ENCODE measurements at regions of chr9 and their contacts with region 1.

Region 1: GRCh38 chr9:36250079-36250478 is 8.2 kb downstream of the GNE start:
- DNase-seq: no peak
- H3K4me3 Mint-ChIP-seq: no peak overlapping the region
- H3K27ac Mint-ChIP-seq: peak overlapping the region; percentile 23
- H3K4me1 Mint-ChIP-seq: peaks cover 5% of the 10 kb centered on the region
- H3K27me3 Mint-ChIP-seq: no peaks in the 10 kb centered on the region
- CTCF ChIP-seq: no peak

Region 2: GRCh38 chr9:36174731-36175130 is 75.3 kb before region 1 on chr9:
- CTCF ChIA-PET with region 1: no interaction called
- POLR2A ChIA-PET with region 1: no interaction called
- intact Hi-C with region 1: no loop called
- DNase-seq: no peak
- H3K4me3 Mint-ChIP-seq: no peak overlapping the region
- H3K27ac Mint-ChIP-seq: no peak overlapping the region
- H3K4me1 Mint-ChIP-seq: no peaks in the 10 kb centered on the region
- H3K27me3 Mint-ChIP-seq: no peaks in the 10 kb centered on the region
- CTCF ChIP-seq: no peak

Region 3: DNA sequence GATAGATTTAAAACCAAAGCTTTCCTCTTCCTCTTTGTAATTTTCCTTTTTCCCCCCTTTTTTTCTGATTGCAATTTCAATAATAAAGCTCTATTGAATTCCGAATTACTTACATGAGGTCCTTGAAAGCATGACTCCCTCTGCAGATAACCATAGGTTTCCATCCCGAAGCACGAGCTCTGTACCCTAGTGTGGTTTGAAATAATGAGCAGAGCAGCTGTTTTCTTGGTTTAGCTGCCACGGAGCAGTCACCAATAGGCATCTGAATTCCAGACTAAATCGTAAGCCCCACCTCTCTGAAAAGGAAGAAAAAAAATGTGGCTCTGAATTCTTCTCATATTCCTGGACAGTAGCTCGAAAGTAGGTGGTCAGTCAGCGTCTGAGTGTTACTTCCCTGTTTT is 26.7 kb after region 1 on chr9:
- CTCF ChIA-PET with region 1: interaction called, 5 read pairs
- POLR2A ChIA-PET with region 1: no interaction called
- intact Hi-C with region 1: loop called (anchors 1 kb)
- DNase-seq: no peak
- H3K4me3 Mint-ChIP-seq: no peak overlapping the region
- H3K27ac Mint-ChIP-seq: no peak overlapping the region
- H3K4me1 Mint-ChIP-seq: peaks cover 6% of the 10 kb centered on the region
- H3K27me3 Mint-ChIP-seq: no peaks in the 10 kb centered on the region
- CTCF ChIP-seq: no peak

Region 4: DNA sequence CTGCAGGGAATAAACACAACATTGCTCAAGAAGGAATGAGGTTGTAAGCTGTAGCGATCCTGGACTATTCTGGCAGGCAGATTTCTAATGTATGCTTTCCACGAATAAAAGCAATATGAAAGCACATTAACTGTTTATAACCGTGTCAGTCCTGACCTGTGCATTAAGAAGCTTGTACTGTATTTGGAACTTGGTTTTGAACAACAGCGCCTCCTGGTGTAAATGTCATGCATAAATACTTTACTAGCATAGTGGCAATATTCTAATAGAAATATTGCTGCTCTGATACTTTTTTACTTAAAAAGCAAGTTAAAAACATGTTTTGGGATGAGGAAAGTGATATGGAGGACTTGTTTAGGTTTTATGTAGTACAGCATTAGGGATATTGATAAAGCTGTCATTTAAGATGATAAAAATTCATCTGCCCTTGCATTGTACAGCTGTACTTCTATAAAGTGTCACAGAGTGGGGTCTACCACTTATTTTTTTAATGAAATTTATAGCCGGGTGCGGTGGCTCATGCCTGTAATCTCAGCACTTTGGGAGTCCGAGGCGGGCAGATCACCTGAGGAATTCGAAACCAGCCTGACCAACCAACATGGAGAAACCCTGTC is 78.8 kb after region 1 on chr9:
- CTCF ChIA-PET with region 1: interaction called, 81 read pairs
- POLR2A ChIA-PET with region 1: interaction called, 3 read pairs
- intact Hi-C with region 1: loop called (anchors 1 kb)
- DNase-seq: peak; percentile 79
- H3K4me3 Mint-ChIP-seq: no peak overlapping the region
- H3K27ac Mint-ChIP-seq: no peak overlapping the region
- H3K4me1 Mint-ChIP-seq: peaks cover 8% of the 10 kb centered on the region
- H3K27me3 Mint-ChIP-seq: no peaks in the 10 kb centered on the region
- CTCF ChIP-seq: peak; percentile 56

Region 5: DNA sequence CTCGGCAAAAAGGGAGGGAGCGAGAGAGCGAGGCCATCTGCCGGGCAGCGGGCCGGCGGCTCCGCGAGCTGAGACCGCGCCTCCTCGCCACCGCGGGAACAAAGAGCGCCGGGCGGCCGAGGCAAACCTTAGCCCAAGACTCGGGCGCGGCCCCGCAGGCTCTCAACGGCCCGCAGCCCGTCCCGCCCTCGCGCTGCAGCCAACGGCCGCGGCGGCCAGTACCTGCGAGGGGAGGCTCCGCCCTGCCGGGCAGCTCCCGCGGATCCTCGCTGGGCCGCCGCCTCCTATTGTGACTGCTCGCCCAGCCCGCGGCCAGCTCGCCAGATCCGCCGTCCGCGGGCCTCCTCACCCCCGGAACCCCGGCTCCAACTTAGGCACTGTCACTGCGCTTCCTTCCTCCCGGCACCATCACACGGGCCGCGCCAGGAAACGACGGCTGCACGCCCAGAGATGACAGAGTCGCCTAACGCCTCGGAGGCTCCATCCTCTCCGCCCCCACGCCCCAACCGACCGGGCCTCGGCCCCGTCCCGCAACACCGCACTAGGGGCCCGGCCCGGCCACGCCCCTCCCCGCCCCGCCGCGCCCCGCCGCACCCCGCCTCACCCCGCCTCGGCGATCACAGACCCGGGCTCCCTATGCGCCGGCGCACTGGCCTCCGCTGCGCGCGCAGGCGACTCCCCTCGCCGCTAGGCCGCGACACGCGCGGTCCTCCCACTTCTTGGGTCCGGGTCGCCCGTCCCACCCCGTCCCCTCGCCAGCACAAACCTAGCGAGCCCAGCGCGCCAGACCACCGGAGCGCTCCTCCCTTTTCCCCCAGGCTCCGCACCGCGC is 150.5 kb after region 1 on chr9:
- CTCF ChIA-PET with region 1: no interaction called
- POLR2A ChIA-PET with region 1: no interaction called
- intact Hi-C with region 1: loop called (anchors 2 kb)
- DNase-seq: peak; percentile 86
- H3K4me3 Mint-ChIP-seq: peak overlapping the region; percentile 78
- H3K27ac Mint-ChIP-seq: peak overlapping the region; percentile 84
- H3K4me1 Mint-ChIP-seq: peaks cover 24% of the 10 kb centered on the region
- H3K27me3 Mint-ChIP-seq: no peaks in the 10 kb centered on the region
- CTCF ChIP-seq: no peak

Region 6: GRCh38 chr9:36551129-36551528 is 301.1 kb after region 1 on chr9:
- CTCF ChIA-PET with region 1: no interaction called
- POLR2A ChIA-PET with region 1: no interaction called
- intact Hi-C with region 1: loop called (anchors 10 kb)
- DNase-seq: no peak
- H3K4me3 Mint-ChIP-seq: no peak overlapping the region
- H3K27ac Mint-ChIP-seq: no peak overlapping the region
- H3K4me1 Mint-ChIP-seq: peaks cover 5% of the 10 kb centered on the region
- H3K27me3 Mint-ChIP-seq: peaks cover 24% of the 10 kb centered on the region
- CTCF ChIP-seq: no peak

Measured in MCF 10A (cell line).